ENCODE measurements at regions of chr10 and their contacts with region 1.

Region 1: DNA sequence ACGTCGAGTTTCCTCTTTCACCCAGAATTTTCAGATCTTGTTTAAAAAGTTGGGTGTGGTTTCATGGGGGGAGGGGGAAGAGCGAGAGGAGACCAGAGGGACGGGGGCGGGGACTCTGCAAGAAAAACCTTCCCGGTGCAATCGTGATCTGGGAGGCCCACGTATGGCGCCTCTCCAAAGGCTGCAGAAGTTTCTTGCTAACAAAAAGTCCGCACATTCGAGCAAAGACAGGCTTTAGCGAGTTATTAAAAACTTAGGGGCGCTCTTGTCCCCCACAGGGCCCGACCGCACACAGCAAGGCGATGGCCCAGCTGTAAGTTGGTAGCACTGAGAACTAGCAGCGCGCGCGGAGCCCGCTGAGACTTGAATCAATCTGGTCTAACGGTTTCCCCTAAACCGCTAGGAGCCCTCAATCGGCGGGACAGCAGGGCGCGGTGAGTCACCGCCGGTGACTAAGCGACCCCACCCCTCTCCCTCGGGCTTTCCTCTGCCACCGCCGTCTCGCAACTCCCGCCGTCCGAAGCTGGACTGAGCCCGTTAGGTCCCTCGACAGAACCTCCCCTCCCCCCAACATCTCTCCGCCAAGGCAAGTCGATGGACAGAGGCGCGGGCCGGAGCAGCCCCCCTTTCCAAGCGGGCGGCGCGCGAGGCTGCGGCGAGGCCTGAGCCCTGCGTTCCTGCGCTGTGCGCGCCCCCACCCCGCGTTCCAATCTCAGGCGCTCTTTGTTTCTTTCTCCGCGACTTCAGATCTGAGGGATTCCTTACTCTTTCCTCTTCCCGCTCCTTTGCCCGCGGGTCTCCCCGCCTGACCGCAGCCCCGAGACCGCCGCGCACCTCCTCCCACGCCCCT is at the start of gene VIM:
- DNase-seq: peak; percentile 59 to 91 (median 79)
- ATAC-seq: peak; percentile 14 to 45
- H3K4me3 Mint-ChIP-seq: peak within 1 kb of the TSS; percentile 91 to 99 (median 98)
- H3K27ac Mint-ChIP-seq: peak within 1 kb of the TSS; percentile 95 to 100 (median 99)
- H3K4me1 Mint-ChIP-seq: peaks cover 27 to 52% (median 48%) of the 10 kb centered on the region in 4 donors
- H3K27me3 Mint-ChIP-seq: no peaks in the 10 kb centered on the region
- polyA plus RNA-seq, gene VIM: 295 to 479 (median 434) TPM

Region 2: GRCh38 chr10:16933783-16934182 is 294.5 kb before region 1 on chr10:
- POLR2A ChIA-PET with region 1: no interaction called
- DNase-seq: no peak
- ATAC-seq: no peak
- H3K4me3 Mint-ChIP-seq: no peak overlapping the region
- H3K27ac Mint-ChIP-seq: peak overlapping the region in 1 of 10 donors; percentile 65
- H3K4me1 Mint-ChIP-seq: peaks cover 0 to 4% (median under 1%) of the 10 kb centered on the region in 4 donors
- H3K27me3 Mint-ChIP-seq: no peaks in the 10 kb centered on the region

Region 3: GRCh38 chr10:17023386-17024298 is 204.7 kb before region 1 on chr10:
- POLR2A ChIA-PET with region 1: interaction called, 23 read pairs
- DNase-seq: peak; percentile 24 to 92 (median 78)
- ATAC-seq: peak; percentile 79 to 86
- H3K4me3 Mint-ChIP-seq: peak overlapping the region; percentile 23 to 70 (median 50)
- H3K27ac Mint-ChIP-seq: peak overlapping the region; percentile 87 to 98 (median 97)
- H3K4me1 Mint-ChIP-seq: peaks cover 17 to 70% (median 63%) of the 10 kb centered on the region in 4 donors
- H3K27me3 Mint-ChIP-seq: no peaks in the 10 kb centered on the region

Region 4: DNA sequence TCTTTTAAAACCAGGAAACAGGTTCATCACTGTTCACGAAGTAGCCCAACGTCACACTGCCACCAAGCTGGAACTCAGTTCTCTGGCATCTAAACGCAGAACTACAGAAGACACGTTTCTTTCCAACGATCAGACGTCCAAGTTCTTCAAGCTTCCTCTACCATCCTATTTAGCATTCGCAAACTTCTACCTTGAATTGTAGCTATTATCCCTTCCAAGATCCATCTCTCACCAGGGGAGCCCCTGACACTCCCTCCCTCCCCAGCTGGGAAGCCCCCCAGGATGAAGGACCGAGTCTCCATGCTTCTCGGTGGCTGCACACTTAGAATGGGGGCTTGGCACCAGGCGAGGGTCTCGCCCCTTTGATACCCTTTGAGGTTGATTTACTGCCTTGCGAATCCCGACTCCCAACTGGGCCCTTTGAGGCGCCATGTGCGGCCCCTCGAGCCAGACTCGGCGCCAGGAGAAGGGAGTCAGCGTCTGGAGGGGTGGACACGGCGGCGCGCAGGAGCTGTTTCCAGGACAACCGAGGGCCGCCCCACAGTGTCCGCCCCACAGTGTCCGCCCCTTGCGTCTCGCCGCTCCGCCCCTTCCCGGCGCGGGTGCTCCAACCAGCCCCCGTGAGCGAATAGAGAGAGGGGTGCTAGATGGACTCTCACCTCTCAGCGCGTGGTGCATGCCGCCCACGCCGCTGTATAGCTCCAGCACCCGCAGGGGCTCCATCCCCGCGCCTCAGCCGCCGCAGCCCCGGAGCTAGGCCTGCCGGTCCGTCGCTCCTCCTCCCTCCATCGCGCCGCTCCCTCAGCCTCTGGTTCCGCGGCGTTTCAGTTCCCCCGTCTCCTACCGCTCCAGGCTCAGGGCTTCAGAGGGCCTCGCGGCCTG is 27.2 kb before region 1 on chr10 and contains the start of gene TRDMT1:
- POLR2A ChIA-PET with region 1: interaction called, 168 read pairs
- DNase-seq: peak; percentile 57 to 87 (median 76)
- ATAC-seq: peak; percentile 73 to 83
- H3K4me3 Mint-ChIP-seq: peak within 1 kb of the TSS; percentile 91 to 99 (median 93)
- H3K27ac Mint-ChIP-seq: peak within 1 kb of the TSS; percentile 89 to 99 (median 96)
- H3K4me1 Mint-ChIP-seq: peaks cover 16 to 52% (median 41%) of the 10 kb centered on the region in 4 donors
- H3K27me3 Mint-ChIP-seq: no peaks in the 10 kb centered on the region
- polyA plus RNA-seq, gene TRDMT1: 6.9 to 10.7 (median 10.6) TPM

Region 5: DNA sequence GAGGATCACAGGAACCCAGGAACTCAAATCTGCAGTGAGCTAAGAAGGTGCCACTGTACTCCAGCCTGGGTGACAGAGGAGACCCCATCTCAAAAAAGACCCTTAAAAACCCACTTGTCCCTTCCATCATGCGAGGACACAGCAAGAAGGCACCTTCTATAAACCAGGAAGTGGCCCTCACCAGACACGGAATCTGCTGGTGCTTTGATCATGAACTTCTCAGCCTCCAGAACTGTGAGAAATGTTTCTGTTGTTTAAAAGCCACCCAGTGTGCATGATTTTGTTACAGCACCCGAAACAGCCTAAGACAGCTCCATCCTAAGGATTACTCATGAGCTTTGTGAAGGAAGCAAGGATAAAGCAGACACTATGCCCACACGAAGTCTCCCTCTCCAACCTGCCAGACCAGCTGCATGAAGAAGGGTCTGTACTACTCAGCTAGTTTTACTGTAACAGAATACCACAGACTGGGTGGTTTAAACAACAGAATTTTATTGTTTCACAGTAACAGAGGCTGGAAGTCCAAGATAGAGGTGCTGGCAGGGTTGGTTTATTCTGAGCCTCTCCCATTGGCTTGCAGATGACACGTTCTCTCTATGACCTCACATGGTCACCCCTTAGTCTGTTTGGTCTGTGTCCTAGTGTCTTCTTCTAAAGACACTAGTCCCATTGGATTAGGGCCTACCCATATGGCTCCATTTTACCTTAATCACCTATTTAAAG is 13.5 kb after region 1 on chr10:
- POLR2A ChIA-PET with region 1: interaction called, 13 read pairs
- DNase-seq: peak in 3 of 10 donors; percentile 17 to 29 (median 26)
- ATAC-seq: peak; percentile 39 to 69
- H3K4me3 Mint-ChIP-seq: peak overlapping the region in 5 of 10 donors; percentile 19 to 52 (median 26)
- H3K27ac Mint-ChIP-seq: peak overlapping the region; percentile 73 to 93 (median 86)
- H3K4me1 Mint-ChIP-seq: peaks cover 5 to 25% (median 12%) of the 10 kb centered on the region in 4 donors
- H3K27me3 Mint-ChIP-seq: no peaks in the 10 kb centered on the region

Region 6: DNA sequence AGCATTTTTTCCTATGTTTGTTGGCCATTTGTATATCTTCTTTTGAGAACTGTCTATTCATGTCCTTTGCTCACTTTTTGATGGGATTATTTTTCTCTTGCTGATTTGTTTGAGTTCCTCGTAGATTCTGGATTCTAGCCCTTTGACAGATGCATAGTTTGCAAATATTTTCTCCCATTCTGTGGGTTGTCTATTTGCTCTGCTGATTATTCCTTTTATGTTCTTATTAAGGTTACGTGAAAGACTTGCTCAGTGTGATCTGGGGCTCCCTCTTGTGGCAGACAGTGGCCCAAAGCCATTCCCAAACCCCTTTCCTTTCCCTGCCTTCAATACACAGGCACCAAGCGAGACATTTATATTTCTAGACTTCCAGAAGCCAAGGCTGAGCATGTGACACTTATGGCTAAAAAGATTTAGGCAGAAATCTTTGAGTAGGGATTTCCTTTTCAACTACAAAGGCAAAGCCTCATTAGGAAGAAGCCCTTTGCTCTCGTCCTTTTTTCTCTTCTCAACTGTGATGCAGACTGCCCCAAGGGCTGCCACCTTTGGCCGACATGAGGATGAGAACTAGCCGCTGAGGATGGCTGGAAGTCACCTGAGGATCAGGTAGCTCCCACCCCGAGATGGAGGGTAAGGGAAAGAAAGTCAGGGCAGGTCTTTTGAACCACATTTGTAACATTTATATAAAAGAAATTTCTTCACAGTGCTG is 202.5 kb after region 1 on chr10:
- POLR2A ChIA-PET with region 1: interaction called, 20 read pairs
- DNase-seq: peak; percentile 37 to 77 (median 57)
- ATAC-seq: no peak
- H3K4me3 Mint-ChIP-seq: peak overlapping the region in 6 of 10 donors; percentile 1 to 72 (median 38)
- H3K27ac Mint-ChIP-seq: peak overlapping the region in 8 of 10 donors; percentile 5 to 58 (median 40)
- H3K4me1 Mint-ChIP-seq: peaks cover 26 to 58% (median 51%) of the 10 kb centered on the region in 4 donors
- H3K27me3 Mint-ChIP-seq: peaks cover 0 to 11% (median 3%) of the 10 kb centered on the region in 5 donors